ENCODE measurements at regions of chr5 and their contacts with region 1.

Region 1: DNA sequence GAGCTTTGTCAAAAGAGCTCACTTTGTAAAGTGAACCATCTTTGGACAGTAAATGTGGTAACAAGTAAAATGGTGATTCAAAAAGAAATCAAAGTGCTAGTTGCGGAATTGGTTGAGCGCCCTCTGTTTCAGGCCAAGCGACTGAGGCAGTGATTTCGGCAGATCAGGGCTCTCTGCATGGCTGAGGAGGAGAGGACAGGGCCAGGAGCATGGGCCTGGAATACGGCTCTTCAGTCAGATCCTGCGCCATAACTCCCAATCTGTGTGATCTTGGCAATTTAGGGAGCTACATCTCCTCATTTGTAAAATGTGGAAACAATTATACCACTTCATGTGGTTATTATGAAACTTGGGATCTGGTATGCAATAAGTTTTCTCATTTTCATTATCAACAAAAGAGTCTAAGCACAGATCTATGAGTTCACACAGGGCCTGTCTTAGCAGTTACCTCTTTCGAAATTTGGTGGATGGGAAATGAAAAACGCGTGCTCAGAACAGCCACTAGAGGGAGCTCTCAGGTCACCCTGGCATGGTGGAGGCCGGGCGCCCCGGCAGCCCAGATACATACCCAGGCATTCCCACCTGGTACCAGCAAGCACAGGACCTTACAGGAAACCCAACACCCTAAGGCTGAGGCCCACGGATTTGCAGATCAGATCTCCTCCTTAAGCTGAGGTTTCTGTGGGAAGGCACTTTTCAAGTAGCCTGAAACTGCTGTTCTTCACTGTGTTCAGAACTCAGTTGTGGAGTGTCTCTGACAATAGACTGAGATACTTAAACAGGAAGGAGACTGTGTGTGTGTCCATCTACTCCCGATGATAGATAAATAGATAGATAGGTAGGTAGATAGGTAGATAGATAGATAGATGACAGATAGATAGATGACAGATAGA is 303.7 kb downstream of the RAB3C start:
- DNase-seq: peak; percentile 72
- ATAC-seq: peak; percentile 57

Region 2: DNA sequence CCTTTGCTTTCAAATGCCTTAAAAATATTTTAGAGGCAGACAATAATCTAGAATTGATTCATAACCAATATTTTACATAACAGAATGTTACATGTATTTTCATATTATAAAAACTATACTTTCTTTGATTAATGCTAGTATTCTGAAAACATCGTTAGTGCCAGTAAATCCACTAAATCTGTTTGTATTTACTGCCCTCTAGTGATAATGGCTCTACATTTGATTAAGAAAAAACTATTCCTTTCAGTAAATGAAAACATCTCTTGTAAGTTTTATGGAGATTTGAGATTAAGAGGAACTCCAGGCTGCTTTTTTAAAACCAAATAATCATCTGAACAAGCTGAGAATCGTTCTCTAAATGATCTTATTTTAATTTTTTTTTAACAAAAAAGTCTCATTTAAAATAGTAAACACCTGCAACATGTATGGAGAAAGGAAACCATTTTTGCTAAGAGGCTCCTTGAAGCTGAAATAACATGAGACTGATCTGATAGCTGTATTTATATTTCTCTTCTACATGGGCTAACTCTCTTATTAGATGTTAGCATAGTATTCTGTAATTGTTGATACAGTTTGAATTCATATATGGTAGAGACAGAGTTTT is 121.0 kb after region 1 on chr5:
- intact Hi-C with region 1: loop called (anchors 10 kb)
- DNase-seq: no peak
- ATAC-seq: no peak

Region 3: GRCh38 chr5:59174248-59174844 is 287.8 kb after region 1 on chr5:
- intact Hi-C with region 1: loop called (anchors 10 kb)
- DNase-seq: no peak
- ATAC-seq: peak; percentile 81

Region 4: DNA sequence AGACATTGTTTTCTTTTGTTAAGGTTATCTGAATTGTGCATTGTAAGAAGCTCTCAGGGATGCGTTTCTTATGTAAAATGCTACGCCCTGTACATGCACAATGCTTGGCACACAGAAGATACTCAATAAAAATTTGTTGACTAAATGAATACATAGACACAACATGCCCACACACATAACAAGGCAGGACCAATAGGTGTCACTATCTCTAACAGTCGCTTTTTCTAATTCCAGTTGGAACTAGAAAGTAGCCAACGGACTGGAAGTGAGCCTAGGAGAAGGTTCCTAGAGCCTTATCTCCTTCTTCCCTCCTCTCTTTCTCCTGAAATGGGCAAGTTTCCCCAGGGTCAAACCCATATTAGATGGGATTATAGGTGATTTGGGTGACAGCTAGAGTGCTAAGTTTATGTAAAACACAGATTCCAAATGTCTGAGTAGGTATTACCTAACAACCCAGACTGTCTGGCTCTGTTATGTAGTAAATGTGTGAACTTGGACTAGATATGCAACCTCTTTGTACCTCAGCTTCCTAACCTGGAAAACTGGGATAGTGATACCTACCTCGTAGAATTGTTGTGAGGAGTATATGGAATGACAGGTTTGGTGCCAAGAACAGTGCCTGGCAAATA is 299.3 kb after region 1 on chr5:
- intact Hi-C with region 1: no loop called
- DNase-seq: no peak
- ATAC-seq: no peak

Region 5: GRCh38 chr5:59367791-59368394 is 481.3 kb after region 1 on chr5:
- intact Hi-C with region 1: loop called (anchors 10 kb)
- DNase-seq: peak; percentile 41
- ATAC-seq: peak; percentile 81

Measured in left ventricle myocardium superior (tissue), 1 donor.